Right ventricle myocardium superior (tissue), 1 donor: ENCODE measurements at regions of chr9 and their contacts with region 1.

Region 1: GRCh38 chr9:33081128-33081851 is 4.8 kb upstream of the SMU1 start:
- DNase-seq: no peak
- ATAC-seq: peak; percentile 69

Region 2: DNA sequence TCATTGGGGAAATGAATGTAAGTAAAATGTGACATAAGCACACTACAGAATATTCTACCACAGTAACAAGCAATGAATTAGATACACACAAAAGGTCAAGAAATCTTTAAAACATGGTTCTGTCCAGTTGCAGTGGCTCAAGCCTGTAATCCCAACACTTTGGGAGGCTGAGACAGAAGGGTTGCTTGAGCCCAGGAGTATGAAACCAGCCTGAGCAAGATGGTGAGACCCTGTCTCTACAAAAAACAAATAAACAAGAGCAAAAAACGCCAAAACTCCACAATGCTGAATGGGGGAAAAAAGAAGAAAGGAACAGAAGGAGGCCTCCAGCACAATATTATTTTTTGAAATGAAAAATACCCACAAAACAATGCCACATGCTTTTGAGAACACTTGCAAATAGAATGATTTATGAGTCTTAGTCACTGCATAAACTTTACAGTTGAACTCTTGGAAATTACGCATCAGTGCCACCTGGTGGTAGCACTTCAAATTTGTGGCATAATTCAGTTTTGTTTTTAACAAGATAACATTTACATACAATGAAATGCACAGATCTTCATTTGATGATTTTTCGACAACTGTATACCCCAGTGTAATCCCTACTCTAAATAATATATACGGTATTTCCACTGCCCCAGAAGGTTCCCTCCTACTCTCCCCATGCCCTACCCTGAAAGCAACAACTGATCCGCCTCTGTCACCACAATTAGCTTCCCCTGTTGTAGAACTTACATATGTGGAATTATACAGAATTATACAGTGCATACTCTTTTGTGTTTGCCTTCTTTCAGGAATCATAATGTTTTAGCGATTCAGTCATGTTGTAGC is 144.2 kb after region 1 on chr9:
- intact Hi-C with region 1: loop called (anchors 1 kb)
- DNase-seq: no peak
- ATAC-seq: peak; percentile 62